PC-3 (cell line): ENCODE measurements at regions of chr12 and their contacts with region 1.

Region 1: GRCh38 chr12:57319678-57320469 is 68.9 kb upstream of the STAC3 start:
- DNase-seq: no peak
- ATAC-seq: no peak; the same call in 1 of the 2 replicates
- H3K4me3 ChIP-seq: no peak overlapping the region
- H3K27ac ChIP-seq: no peak overlapping the region
- H3K4me1 ChIP-seq: peaks cover 6% of the 10 kb centered on the region; the same call in 1 of the 2 replicates
- H3K27me3 ChIP-seq: no peaks in the 10 kb centered on the region
- CTCF ChIP-seq: no peak

Region 2: DNA sequence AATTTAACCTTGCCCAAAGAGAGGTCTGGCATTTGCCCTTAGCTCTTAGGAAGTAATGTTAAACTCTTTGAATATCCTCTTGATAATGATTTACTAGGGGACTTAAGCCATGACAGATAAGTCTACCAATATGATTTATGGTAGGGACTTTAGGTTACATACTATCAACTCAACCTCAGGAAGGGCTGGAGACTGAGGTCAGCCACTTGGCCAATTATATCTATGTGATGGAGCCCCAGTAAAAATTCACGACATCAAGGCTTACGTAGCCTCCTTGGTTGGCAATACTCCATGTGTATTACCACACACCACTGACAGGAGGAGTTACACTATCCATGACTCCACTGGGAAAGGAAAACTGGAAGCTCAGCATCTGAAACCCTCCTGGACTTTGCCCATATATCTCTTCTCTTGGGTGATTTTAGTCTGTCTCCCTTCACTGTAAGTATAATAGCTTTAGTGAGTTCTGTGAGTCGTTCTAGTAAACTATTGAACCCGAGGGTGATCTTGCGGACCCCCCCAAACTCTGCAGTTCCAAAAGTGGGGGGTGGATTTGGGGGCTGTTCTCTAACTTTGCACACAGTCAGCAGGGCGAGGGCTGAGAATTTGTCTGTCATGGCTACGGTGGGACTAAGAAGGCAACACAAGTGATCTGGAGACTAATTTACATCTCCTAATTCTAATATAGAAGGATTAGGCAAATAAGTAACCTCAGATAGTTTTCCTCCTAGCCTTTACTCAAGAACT is 48.6 kb after region 1 on chr12:
- CTCF ChIA-PET with region 1: no interaction called
- POLR2A ChIA-PET with region 1: no interaction called
- intact Hi-C with region 1: loop called (anchors 10 kb)
- DNase-seq: no peak
- ATAC-seq: no peak
- H3K4me3 ChIP-seq: no peak overlapping the region
- H3K27ac ChIP-seq: no peak overlapping the region
- H3K4me1 ChIP-seq: no peaks in the 10 kb centered on the region
- H3K27me3 ChIP-seq: no peaks in the 10 kb centered on the region
- CTCF ChIP-seq: no peak